ENCODE measurements at regions of chr11 and their contacts with region 1.

Region 1: GRCh38 chr11:43825217-43825816 is 55.3 kb upstream of the ALKBH3 start:
- DNase-seq: peak; percentile 65
- H3K4me3 Mint-ChIP-seq: no peak overlapping the region
- H3K27ac Mint-ChIP-seq: no peak overlapping the region
- H3K4me1 Mint-ChIP-seq: peaks cover 2% of the 10 kb centered on the region
- H3K27me3 Mint-ChIP-seq: no peaks in the 10 kb centered on the region

Region 2: GRCh38 chr11:43852057-43852636 is 26.8 kb after region 1 on chr11:
- intact Hi-C with region 1: loop called (anchors 1 kb)
- DNase-seq: peak; percentile 89
- H3K4me3 Mint-ChIP-seq: no peak overlapping the region
- H3K27ac Mint-ChIP-seq: no peak overlapping the region
- H3K4me1 Mint-ChIP-seq: peaks cover 2% of the 10 kb centered on the region
- H3K27me3 Mint-ChIP-seq: no peaks in the 10 kb centered on the region

Measured in activated CD4-positive, alpha-beta T cell treated with anti-CD3 and anti-CD28 coated beads, Interleukin-2, amount 10 ng/mL, durations not matched to agents 24 days and 14 days (primary cell).